ENCODE measurements at regions of chr4 and their contacts with region 1.

Region 1: DNA sequence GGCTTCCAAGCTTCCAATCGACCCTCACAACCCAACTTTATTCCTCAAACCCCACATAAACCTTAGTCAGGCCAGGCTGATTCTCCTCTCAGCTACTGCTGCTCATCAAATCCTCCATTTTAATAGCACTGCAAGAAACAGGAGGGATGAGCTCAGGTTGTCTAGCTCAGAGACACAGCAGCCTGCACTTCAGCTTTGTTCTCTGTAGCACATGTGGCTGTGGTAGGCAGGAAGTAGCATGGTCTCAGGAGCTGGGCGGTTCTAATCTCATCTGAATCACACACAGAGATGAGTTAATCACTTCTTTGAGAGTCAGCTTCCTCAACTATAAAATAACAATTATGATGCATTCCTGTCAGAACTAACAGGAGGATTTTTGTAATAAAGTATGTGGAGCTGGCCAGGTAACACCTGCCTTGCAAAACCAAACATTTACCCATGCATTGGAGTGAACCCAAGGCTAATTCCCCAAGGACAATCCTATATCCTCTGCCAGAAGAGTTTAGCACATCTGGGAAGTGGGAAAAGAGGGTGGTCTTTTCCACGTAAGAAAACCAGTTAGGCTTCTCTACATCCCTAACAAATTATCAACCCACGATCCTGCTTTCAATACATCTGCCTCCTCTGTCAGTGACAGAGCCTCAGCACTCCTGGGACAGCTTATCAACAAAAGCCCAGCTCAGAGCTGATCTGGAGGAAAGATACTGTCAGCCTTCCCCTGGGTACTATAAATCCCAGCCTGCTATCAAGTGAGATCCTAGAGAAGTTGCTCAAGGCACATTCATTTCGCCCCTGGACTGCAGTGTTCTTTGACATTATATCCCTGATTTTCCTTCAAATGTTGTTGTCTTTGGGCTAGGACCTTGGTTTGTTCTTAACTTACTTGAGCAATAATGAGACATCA is 32.8 kb downstream of the ELOVL6 start:
- DNase-seq: peak; percentile 57
- H3K4me3 Mint-ChIP-seq: peak overlapping the region; percentile 50
- H3K27ac Mint-ChIP-seq: peak overlapping the region; percentile 99
- H3K4me1 Mint-ChIP-seq: peaks cover 28% of the 10 kb centered on the region
- H3K27me3 Mint-ChIP-seq: no peaks in the 10 kb centered on the region

Region 2: DNA sequence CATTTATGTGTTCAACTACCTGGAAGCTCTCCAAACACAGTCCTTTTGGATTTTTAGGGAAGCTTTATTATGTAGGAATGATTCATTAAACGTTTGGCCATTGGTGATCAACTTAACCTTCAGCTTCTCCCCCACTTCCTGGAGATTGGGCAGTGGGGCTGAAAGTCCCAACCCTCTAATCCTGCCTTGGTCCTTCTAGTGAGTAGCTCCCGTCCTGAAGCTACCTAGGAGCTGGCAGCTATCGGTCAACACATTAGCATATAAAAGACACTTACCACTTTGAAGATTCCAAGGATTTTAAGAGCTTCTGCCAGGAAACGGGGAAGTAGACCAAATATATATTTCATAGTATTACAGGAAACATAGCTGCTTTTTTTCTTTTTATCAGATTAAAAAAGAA is 535.9 kb before region 1 on chr4:
- intact Hi-C with region 1: loop called (anchors 5 kb)
- DNase-seq: no peak
- H3K4me3 Mint-ChIP-seq: no peak overlapping the region
- H3K27ac Mint-ChIP-seq: no peak overlapping the region
- H3K4me1 Mint-ChIP-seq: peaks cover 21% of the 10 kb centered on the region
- H3K27me3 Mint-ChIP-seq: no peaks in the 10 kb centered on the region

Region 3: GRCh38 chr4:110049951-110050925 is 115.4 kb before region 1 on chr4:
- intact Hi-C with region 1: loop called (anchors 1 kb)
- DNase-seq: peak; percentile 27
- H3K4me3 Mint-ChIP-seq: no peak overlapping the region
- H3K27ac Mint-ChIP-seq: no peak overlapping the region
- H3K4me1 Mint-ChIP-seq: peaks cover 52% of the 10 kb centered on the region
- H3K27me3 Mint-ChIP-seq: no peaks in the 10 kb centered on the region

Region 4: GRCh38 chr4:110124711-110125110 is 40.9 kb before region 1 on chr4:
- intact Hi-C with region 1: loop called (anchors 5 kb)
- DNase-seq: no peak
- H3K4me3 Mint-ChIP-seq: no peak overlapping the region
- H3K27ac Mint-ChIP-seq: no peak overlapping the region
- H3K4me1 Mint-ChIP-seq: peaks cover 31% of the 10 kb centered on the region
- H3K27me3 Mint-ChIP-seq: no peaks in the 10 kb centered on the region